Posterior cingulate gyrus (tissue), 11 donors: ENCODE measurements at regions of chr10 and their contacts with region 1.

Region 1: DNA sequence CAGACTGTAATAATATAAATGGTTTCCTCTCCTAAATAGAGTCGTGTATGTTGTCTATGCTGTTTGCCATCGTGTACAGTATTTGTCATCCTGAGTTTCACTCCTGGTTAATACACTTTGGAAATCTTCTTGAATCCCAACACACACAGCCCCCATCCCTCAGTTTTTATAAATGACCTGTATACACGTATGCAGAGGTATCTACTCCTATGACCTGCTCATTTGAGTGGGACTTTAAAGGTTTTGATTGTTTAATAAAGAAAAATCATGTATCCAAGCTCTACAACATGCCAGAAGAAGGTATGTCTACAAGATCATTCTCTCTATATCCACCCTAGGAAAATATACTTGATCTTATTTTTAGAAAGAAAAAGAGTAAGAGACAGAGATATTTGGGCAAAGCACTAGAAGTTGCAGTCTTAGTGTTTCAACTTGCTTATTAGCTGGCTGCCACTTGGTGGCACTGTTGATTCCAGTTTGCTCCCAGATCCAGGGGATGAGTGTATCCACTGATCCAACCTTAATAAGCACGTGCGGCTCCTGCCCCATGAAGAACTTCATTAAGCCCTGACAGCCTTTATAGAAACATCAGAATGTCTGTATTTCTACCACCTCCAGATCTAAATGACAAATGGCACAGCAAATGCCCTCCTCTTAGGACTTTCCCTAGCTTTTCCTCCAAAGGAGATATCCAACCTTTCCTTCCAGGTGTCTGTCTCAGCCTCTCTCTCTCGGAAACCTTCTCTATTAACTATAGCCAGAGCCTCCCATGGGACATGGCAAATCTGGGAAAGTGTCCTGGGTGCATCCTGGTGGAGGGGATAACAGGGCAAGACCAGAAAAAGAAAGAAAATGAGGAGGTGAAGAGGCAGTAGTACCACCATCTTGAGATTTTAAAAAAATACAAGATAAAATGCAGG is 181.6 kb upstream of the NEBL start:
- DNase-seq: peak in 7 of 10 donors; percentile 25 to 93 (median 56)

Region 2: DNA sequence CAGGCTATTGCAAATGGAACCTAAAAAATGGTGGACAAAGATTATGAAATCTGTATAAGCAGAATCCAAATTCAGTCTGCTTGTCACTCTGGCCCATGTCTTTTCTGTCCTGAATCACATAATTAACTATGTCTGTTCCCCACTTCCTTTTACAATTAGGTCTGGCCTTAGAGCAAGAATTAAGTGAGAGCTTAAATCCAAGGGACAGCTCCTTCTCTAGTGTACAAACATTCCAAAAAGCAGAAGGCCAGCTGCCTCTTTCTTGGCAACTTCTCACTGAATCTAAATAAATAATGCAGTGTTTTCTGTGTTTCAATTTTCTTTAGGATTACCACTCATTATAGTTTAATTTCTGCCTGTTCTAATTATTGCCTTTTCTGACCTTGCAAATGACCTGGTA is 142.3 kb before region 1 on chr10:
- intact Hi-C with region 1: no loop called
- DNase-seq: no peak

Region 3: GRCh38 chr10:21173812-21174714 is 95.4 kb after region 1 on chr10:
- intact Hi-C with region 1: loop called (anchors 10 kb)
- DNase-seq: peak; percentile 26 to 96 (median 76)

Region 4: GRCh38 chr10:21260506-21261149 is 182.0 kb after region 1 on chr10:
- intact Hi-C with region 1: no loop called
- DNase-seq: no peak

Region 5: GRCh38 chr10:21270976-21271375 is 192.3 kb after region 1 on chr10:
- intact Hi-C with region 1: loop called (anchors 2 kb)
- DNase-seq: no peak